Dendritic cell treated with granulocyte-macrophage colony-stimulating factor and Interleukin-4, amounts not matched to agents 40 ng/mL and 50 ng/mL, for 4 days (primary cell): ENCODE measurements at regions of chr11 and their contacts with region 1.

Region 1: GRCh38 chr11:1749414-1750312 is 732 bp downstream of the IFITM10 start:
- H3K4me3 Mint-ChIP-seq: peak overlapping the region; percentile 27
- H3K27ac Mint-ChIP-seq: peak overlapping the region; percentile 2
- H3K4me1 Mint-ChIP-seq: peaks cover 68% of the 10 kb centered on the region
- H3K27me3 Mint-ChIP-seq: peaks cover 63% of the 10 kb centered on the region

Region 2: GRCh38 chr11:1792461-1792860 is 42.8 kb after region 1 on chr11:
- intact Hi-C with region 1: loop called (anchors 5 kb)
- H3K4me3 Mint-ChIP-seq: peak overlapping the region; percentile 57
- H3K27ac Mint-ChIP-seq: peak overlapping the region; percentile 66
- H3K4me1 Mint-ChIP-seq: peaks cover 8% of the 10 kb centered on the region
- H3K27me3 Mint-ChIP-seq: peaks cover 43% of the 10 kb centered on the region

Region 3: DNA sequence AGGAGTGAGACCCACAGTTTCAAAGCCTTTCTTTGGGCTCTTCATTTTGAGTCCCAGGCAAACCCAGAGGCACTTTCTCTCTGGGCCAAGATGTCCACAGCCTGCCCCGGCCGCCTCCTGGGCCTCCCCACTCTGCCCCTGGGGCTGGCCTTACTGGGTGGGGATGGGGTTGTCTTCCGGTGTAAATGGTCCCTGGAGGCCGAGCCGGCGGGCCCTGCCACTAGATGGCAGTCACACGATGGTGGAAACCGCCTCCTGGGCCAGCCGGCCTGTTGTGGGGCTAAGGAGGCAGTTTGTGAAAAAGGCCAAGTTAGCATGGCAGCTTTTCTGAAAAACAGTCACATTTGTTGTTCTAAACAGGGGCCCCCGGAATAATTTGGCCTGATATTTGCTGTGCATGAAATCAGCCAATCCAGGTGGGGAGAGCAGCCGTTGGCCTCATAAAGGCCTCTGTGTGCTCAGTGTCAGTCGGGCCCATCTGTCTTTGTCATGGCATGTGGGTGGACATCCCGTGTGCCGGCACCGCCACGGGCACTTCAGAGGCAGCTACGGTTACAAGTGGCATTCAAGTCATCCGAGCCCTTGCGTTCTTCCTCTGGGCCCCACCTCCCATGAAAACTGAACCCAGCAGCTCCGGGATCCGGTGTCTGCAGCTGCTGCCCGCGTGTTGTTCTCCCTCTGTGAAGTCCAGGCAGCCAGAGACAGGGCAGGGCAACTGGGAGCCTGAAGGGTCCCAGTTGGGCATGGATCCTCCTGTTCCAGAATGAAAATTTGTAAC is 204.0 kb after region 1 on chr11:
- intact Hi-C with region 1: no loop called
- H3K4me3 Mint-ChIP-seq: no peak overlapping the region
- H3K27ac Mint-ChIP-seq: no peak overlapping the region
- H3K4me1 Mint-ChIP-seq: no peaks in the 10 kb centered on the region
- H3K27me3 Mint-ChIP-seq: no peaks in the 10 kb centered on the region